PC-9 (cell line): ENCODE measurements at regions of chr7 and their contacts with region 1.

Region 1: GRCh38 chr7:120941064-120941463 is 9.5 kb upstream of the ING3 start:
- DNase-seq: no peak
- H3K4me3 ChIP-seq: no peak overlapping the region
- H3K27ac ChIP-seq: no peak overlapping the region
- H3K4me1 ChIP-seq: no peaks in the 10 kb centered on the region
- H3K27me3 ChIP-seq: no peaks in the 10 kb centered on the region
- CTCF ChIP-seq: peak; percentile 55

Region 2: DNA sequence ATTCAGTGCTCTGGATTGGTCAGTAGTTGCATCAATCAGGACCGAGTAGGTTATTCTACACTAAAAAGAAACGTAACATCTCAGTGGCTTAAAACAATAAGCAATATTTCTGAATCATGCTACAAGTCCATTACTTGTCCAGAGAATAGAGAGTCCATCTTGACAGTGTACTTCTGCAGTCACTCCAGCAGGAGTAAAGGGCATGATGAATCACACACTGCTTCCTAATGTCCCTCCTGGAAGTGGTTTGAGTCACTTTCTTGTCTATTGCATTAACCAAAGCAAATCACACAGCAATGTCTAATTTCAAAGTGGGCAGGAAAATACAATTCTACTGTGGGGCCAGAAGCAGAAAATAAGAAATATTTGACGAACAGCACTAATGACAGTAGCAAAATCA is 207.9 kb before region 1 on chr7:
- CTCF ChIA-PET with region 1: no interaction called
- POLR2A ChIA-PET with region 1: no interaction called
- intact Hi-C with region 1: loop called (anchors 2 kb)
- DNase-seq: no peak
- H3K4me3 ChIP-seq: no peak overlapping the region
- H3K27ac ChIP-seq: no peak overlapping the region
- H3K4me1 ChIP-seq: no peaks in the 10 kb centered on the region
- H3K27me3 ChIP-seq: no peaks in the 10 kb centered on the region
- CTCF ChIP-seq: no peak

Region 3: GRCh38 chr7:120792091-120792860 is 148.8 kb before region 1 on chr7:
- CTCF ChIA-PET with region 1: no interaction called
- POLR2A ChIA-PET with region 1: no interaction called
- intact Hi-C with region 1: loop called (anchors 5 kb)
- DNase-seq: peak in 1 of 2 experiments; percentile 57
- H3K4me3 ChIP-seq: no peak overlapping the region
- H3K27ac ChIP-seq: no peak overlapping the region
- H3K4me1 ChIP-seq: no peaks in the 10 kb centered on the region
- H3K27me3 ChIP-seq: no peaks in the 10 kb centered on the region
- CTCF ChIP-seq: peak; percentile 85

Region 4: GRCh38 chr7:120805636-120806388 is 135.3 kb before region 1 on chr7:
- CTCF ChIA-PET with region 1: interaction called, 4 read pairs
- POLR2A ChIA-PET with region 1: no interaction called
- intact Hi-C with region 1: loop called (anchors 1 kb)
- DNase-seq: peak in 1 of 2 experiments; percentile 51
- H3K4me3 ChIP-seq: no peak overlapping the region
- H3K27ac ChIP-seq: no peak overlapping the region
- H3K4me1 ChIP-seq: no peaks in the 10 kb centered on the region
- H3K27me3 ChIP-seq: no peaks in the 10 kb centered on the region
- CTCF ChIP-seq: peak; percentile 91